ENCODE measurements at regions of chr16 and their contacts with region 1.

Region 1: GRCh38 chr16:77300232-77300631 is 101.0 kb downstream of the SYCE1L start:
- DNase-seq: peak; percentile 54

Region 2: DNA sequence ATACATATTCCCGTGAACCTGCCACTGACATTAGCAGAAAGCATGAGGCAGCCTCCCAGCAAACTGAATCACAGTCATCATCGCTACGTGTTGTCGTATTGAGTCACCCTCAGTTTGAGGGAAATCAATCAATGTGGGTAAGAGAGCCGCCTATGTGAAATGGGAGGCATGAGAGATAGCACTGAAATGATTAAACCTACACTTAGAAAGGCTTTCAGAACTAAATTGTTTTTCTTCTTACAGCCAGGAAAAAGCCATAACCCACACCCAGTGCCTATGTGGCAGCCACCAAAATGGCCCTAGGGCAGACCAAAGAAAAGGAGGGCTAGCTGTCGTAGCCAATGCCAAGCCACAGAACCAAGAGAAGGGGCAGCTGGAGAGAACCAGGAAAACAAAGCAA is 44.1 kb after region 1 on chr16:
- in situ Hi-C with region 1: loop called (anchors 5 kb)
- DNase-seq: peak; percentile 48

Region 3: DNA sequence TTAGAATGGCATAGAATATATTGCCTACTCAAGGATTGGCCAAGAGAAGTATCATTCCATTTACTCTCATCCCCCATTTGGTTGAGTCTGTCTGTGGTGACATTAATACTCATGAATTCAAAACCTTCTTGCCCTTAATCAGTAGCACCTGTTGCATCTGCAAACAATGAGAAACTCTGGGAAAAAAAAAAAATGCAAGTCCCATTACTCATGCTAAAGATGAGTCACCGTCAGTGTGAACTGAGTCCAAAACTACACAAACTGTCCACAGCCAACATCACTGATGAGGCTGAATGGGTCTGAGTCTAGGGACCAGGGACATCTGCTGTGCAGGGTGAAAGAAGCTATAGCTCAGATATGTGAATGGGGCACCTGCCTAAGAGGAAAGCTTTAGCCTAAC is 231.5 kb after region 1 on chr16:
- in situ Hi-C with region 1: no loop called
- DNase-seq: peak; percentile 71